ENCODE measurements at regions of chr9 and their contacts with region 1.

Region 1: GRCh38 chr9:114348906-114349482 is 19.3 kb downstream of the ORM2 start:
- DNase-seq: peak; percentile 80 to 81
- H3K4me3 ChIP-seq: no peak overlapping the region
- H3K4me3 Mint-ChIP-seq: peak overlapping the region; percentile 0
- H3K27ac Mint-ChIP-seq: peak overlapping the region; percentile 69
- H3K4me1 ChIP-seq: peaks cover 17% of the 10 kb centered on the region
- H3K4me1 Mint-ChIP-seq: peaks cover 15% of the 10 kb centered on the region
- H3K27me3 ChIP-seq: no peaks in the 10 kb centered on the region
- H3K27me3 Mint-ChIP-seq: no peaks in the 10 kb centered on the region
- CTCF ChIP-seq: no peak

Region 2: GRCh38 chr9:114397848-114398605 is 49.0 kb after region 1 on chr9:
- CTCF ChIA-PET with region 1: interaction called, 4 read pairs
- POLR2A ChIA-PET with region 1: interaction called, 3 read pairs
- intact Hi-C with region 1: loop called (anchors 2 kb)
- DNase-seq: peak; percentile 96 to 98
- H3K4me3 ChIP-seq: peak overlapping the region; percentile 89
- H3K4me3 Mint-ChIP-seq: peak overlapping the region; percentile 91
- H3K27ac Mint-ChIP-seq: peak overlapping the region; percentile 99
- H3K4me1 ChIP-seq: peaks cover 15% of the 10 kb centered on the region
- H3K4me1 Mint-ChIP-seq: peaks cover 12% of the 10 kb centered on the region
- H3K27me3 ChIP-seq: no peaks in the 10 kb centered on the region
- H3K27me3 Mint-ChIP-seq: no peaks in the 10 kb centered on the region
- CTCF ChIP-seq: no peak

Measured in Caco-2 (cell line).